AG04450 (cell line): ENCODE measurements at regions of chr1 and their contacts with region 1.

Region 1: DNA sequence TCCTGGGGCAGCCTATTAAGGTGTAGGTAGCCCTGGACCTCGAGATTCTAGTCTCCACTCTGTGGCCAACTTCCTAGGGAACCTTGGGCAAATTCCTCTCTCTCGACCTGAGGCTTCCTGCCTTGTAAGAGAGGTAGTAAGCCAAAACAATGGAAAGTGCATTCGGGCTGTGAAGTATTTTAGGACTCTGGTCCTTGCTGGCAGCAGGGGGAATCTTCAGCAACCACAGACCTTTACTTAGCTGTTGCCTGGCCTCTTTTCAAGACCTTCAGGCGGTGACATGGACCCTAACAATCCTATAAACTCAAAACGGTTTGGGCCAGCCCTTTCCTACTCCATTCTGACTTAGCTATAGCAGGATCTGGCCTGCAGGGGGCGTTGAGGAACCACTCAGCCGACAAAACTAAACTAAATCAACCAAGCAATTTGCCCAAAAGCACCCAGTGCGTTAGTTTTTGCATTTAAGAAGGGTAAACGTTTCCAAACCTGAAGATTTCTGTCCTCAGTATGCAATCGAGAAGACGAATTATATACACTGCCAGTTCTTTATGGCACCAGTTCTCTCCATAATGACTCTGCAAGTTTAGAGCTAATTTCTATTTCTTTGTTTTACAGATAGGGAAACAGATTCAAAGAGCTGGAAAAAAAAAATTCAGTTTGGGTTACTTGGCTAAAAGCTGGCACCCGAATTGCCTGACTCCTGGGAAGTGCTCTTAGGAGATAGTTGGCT is 10.9 kb upstream of the SESN2 start:
- DNase-seq: peak; percentile 64
- H3K4me3 ChIP-seq: peak overlapping the region; percentile 24
- H3K27ac ChIP-seq: peak overlapping the region; percentile 76
- H3K27me3 ChIP-seq: no peaks in the 10 kb centered on the region
- CTCF ChIP-seq: peak; percentile 94

Region 2: DNA sequence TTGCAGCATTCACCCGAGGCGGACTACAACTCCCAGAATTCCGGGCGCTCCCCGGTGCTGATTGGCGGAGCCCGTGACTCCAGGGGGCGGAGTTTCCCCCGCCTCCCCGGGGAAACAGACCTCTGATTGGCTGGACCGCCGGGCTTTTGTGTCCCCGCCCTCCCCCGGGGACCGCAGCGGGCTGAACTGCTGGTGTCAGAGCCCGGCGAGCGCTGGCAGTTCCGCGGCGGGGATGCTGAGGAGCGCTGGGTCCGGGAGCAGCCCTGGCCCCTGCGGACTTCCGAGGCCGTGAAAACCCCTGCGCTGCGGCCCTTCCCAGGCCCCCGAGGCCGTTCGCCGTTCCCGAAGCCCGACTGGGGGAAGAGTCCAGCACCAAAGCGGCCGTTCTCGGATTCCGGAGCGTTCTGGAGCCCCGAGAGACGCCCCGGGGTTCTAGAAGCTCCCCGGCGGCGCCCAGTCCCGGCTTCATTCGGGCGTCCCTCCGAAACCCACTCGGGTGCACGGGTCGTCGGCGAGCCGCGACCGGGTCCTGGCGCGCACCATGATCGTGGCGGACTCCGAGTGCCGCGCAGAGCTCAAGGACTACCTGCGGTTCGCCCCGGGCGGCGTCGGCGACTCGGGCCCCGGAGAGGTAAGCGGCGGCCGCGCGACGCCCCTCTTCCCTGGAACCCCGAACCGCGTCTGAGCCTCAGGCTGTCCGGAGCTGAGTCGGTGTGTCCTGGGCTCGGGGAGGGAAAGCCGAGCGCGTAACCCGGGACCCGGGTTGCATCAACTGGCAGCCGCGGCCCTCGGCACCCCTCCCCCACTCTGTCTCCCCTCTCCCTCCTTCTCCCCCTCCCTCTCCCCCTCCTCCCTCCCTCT is 11.1 kb after region 1 on chr1 and contains the start of gene SESN2:
- CTCF ChIA-PET with region 1: interaction called, 69 read pairs
- POLR2A ChIA-PET with region 1: interaction called, 46 read pairs
- DNase-seq: peak; percentile 95
- H3K4me3 ChIP-seq: peak within 1 kb of the TSS; percentile 93
- H3K27ac ChIP-seq: peak within 1 kb of the TSS; percentile 95
- H3K27me3 ChIP-seq: no peaks in the 10 kb centered on the region
- CTCF ChIP-seq: no peak
- polyA plus RNA-seq, gene SESN2: 27.5 and 31.9 TPM in 2 replicates

Region 3: GRCh38 chr1:28329395-28330153 is 81.1 kb after region 1 on chr1:
- CTCF ChIA-PET with region 1: interaction called, 12 read pairs
- POLR2A ChIA-PET with region 1: interaction called, 18 read pairs
- DNase-seq: no peak
- H3K4me3 ChIP-seq: peak overlapping the region; percentile 85
- H3K27ac ChIP-seq: peak overlapping the region; percentile 86
- H3K27me3 ChIP-seq: no peaks in the 10 kb centered on the region
- CTCF ChIP-seq: 0 out of 2 replicates have a peak, but pooled peaks have one; percentile 13

Region 4: DNA sequence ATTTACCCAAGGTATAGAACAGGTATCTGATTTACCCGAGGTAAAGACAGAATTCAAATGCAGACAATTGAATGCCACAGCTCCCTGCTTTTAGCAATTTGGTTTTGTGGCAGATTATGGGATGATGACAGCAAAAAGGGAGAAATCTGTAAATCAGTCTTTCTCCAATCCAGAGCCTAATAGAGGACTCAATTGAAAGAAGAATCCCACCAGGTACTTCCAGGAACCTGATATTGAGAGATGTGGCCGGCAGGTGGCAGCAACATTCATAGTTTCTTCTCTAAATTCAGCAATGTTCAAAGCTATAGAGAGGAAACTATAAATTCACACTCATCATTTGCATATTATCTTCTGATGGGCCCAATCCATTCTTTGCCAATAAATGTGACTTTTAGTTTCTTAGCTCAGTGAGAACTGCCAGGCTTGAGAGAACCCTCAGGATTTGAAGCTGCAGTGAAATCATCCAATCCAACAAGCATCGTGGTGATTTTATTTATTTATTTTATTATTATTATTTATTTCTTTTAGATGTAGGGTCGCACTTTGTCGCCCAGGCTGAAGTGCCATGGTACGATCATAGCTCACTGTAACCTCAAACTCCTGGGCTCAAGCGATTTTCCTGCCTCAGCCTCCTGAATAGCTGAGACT is 111.3 kb after region 1 on chr1:
- CTCF ChIA-PET with region 1: interaction called, 17 read pairs
- POLR2A ChIA-PET with region 1: no interaction called
- DNase-seq: no peak
- H3K4me3 ChIP-seq: no peak overlapping the region
- H3K27ac ChIP-seq: no peak overlapping the region
- H3K27me3 ChIP-seq: no peaks in the 10 kb centered on the region
- CTCF ChIP-seq: peak; percentile 73

Region 5: DNA sequence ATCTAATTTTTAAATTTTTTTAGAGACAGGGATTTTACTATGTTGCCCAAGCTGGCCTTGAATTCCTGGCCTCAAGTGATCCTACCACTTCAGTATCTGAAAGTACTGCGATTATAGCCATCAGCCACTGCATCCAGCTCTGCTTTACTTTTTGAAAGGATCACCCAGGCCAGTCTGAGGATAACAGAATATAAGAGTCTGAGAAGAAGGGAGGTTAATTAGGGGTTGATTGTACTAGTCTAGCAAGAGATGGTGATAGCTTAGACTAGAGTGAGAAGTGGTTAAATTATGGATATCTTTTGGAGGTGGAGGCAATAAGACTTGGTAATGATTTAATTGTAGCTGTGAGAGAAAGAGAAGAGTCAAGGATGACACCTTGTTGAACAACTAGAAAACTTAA is 153.3 kb after region 1 on chr1:
- CTCF ChIA-PET with region 1: interaction called, 11 read pairs
- POLR2A ChIA-PET with region 1: no interaction called
- DNase-seq: no peak
- H3K4me3 ChIP-seq: no peak overlapping the region
- H3K27ac ChIP-seq: no peak overlapping the region
- H3K27me3 ChIP-seq: no peaks in the 10 kb centered on the region
- CTCF ChIP-seq: no peak

Region 6: GRCh38 chr1:28602536-28603439 is 354.3 kb after region 1 on chr1:
- CTCF ChIA-PET with region 1: interaction called, 38 read pairs
- POLR2A ChIA-PET with region 1: interaction called, 4 read pairs
- DNase-seq: peak; percentile 55
- H3K4me3 ChIP-seq: no peak overlapping the region
- H3K27ac ChIP-seq: peak overlapping the region; percentile 85
- H3K27me3 ChIP-seq: no peaks in the 10 kb centered on the region
- CTCF ChIP-seq: peak; percentile 83

Region 7: DNA sequence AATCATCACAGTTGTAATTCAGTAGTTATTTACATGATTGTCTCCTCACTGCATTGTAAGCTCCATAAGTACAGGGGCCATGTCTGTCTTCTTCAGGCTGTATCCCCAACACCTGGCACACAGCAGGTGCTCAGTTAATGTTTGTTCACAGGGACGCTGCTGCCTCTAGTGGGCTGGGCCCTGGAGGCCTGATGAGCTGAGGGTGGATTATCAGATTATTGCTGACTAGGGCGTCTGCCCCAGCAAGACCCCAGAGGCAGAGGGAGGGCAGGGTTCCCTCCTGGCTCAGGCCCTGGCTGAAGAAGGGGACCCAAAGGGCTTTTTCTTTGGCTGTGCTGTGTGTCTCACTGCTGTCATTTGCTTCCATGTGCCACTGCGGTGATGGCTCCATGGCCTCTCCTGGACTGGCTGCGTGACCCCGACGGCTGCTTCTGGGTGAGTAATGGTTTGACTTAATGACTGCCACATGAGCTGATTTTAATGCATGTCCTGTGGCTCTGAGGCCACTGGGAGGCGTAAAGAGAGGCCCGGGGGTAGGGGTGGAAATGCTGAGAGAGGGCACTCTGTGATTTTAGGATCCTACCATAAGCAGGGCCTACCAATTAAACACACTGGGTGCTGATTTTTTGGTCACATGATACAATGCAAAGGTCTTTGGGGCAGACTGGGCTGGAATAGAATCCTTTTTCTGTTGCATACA is 645.1 kb after region 1 on chr1:
- CTCF ChIA-PET with region 1: no interaction called
- POLR2A ChIA-PET with region 1: no interaction called
- DNase-seq: no peak
- H3K4me3 ChIP-seq: no peak overlapping the region
- H3K27ac ChIP-seq: no peak overlapping the region
- H3K27me3 ChIP-seq: peaks cover 7% of the 10 kb centered on the region
- CTCF ChIP-seq: peak; percentile 45